Upper lobe of right lung (tissue), 1 donor: ENCODE measurements at regions of chr4 and their contacts with region 1.

Region 1: GRCh38 chr4:71229477-71230270 is 109.1 kb upstream of the SLC4A4 start:
- DNase-seq: no peak
- ATAC-seq: peak; percentile 61
- H3K4me3 ChIP-seq: no peak overlapping the region
- H3K27ac ChIP-seq: no peak overlapping the region
- H3K4me1 ChIP-seq: peaks cover 18% of the 10 kb centered on the region
- H3K27me3 ChIP-seq: no peaks in the 10 kb centered on the region
- CTCF ChIP-seq: peak; percentile 63

Region 2: DNA sequence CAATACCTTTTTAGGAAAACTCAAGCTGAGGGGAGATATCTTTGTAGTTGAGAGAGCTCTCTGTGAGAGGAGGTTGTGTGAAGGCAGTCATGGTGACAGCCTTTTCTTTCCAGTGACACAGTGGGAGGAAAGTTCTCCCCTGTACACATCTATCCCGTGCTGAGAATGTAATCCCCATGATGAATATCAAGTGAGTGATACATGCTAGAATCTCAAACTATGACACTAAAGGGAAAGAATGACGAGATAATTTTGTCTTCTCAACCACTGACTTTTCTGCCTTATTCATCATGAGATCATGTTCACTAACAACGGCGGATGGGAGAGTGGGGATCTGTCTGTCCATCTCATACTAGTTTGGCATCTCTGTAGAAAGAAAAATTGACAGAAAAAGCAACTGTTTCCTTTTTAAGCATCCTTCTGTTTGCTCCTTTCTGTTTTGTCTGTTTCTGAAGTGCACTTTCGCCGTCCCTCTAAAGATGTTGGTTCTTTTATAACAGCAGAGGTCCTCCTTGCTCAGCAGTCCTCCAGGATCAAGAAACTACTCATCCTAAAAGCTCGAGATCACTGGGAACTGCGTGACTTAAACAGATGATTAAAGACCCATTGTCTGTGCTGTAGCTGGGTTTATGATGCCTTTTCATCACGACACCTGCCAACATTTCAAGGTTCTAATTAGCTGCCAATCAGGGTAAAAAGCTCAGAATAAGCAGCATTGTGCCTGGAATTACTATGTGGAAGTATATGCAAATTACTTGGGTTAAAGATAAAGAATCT is 98.7 kb before region 1 on chr4:
- intact Hi-C with region 1: no loop called
- DNase-seq: no peak
- ATAC-seq: no peak
- H3K4me3 ChIP-seq: no peak overlapping the region
- H3K27ac ChIP-seq: no peak overlapping the region
- H3K4me1 ChIP-seq: no peaks in the 10 kb centered on the region
- H3K27me3 ChIP-seq: no peaks in the 10 kb centered on the region
- CTCF ChIP-seq: no peak

Region 3: GRCh38 chr4:72076562-72076961 is 846.9 kb after region 1 on chr4:
- intact Hi-C with region 1: loop called (anchors 10 kb)
- DNase-seq: no peak
- ATAC-seq: no peak
- H3K4me3 ChIP-seq: no peak overlapping the region
- H3K27ac ChIP-seq: no peak overlapping the region
- H3K4me1 ChIP-seq: no peaks in the 10 kb centered on the region
- H3K27me3 ChIP-seq: no peaks in the 10 kb centered on the region
- CTCF ChIP-seq: no peak